Sigmoid colon (tissue), 7 donors: ENCODE measurements at regions of chr10 and their contacts with region 1.

Region 1: DNA sequence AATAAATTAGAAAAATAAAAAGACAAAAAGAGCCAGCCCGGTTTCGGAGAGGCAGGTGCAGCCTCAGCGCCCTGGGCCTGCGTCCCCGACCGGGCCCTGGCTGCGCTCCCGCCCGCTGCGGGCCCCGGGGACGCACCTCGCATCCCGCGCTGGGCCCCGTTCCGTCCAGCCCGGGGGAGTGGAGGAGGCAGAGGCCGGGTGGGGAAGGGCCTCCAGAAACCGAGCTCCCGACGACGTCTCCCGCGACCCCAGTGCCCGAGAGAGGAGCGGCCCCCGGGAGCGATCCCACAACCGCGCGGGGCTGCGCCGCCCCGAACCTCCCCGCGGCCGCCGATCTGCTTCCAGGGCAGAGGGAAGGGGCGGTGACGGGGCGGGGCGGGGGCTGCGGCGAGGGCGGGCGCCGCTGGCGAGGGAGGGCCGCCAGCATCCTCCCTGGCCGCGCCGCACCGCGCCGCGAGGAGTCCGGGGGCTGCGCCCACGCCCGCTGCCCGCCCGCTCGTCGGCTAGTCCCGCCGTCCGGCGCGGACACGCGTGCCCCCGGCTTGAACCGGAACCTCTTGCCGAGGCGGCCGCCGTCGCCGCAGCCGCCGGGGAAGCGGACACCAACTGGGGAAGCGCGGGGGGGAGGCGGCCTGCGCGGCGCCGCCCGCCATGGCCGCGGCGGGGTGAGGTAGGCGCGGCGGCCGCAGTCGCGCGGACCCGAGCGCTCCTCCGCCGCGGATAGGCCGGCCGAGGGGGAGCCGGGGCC is at the start of gene CCNY:
- DNase-seq: peak; percentile 87
- H3K4me3 ChIP-seq: peak within 1 kb of the TSS; percentile 93 to 98 (median 96)
- H3K27ac ChIP-seq: peak within 1 kb of the TSS; percentile 87 to 96 (median 94)
- H3K4me1 ChIP-seq: peaks cover 0 to 79% (median 71%) of the 10 kb centered on the region in 4 donors
- H3K27me3 ChIP-seq: no peaks in the 10 kb centered on the region
- CTCF ChIP-seq: no peak
- EP300 ChIP-seq: no peak
- POLR2A ChIP-seq: peak; percentile 49 to 73
- total RNA-seq, gene CCNY: 35.7 to 45.7 (median 40.7) TPM

Region 2: DNA sequence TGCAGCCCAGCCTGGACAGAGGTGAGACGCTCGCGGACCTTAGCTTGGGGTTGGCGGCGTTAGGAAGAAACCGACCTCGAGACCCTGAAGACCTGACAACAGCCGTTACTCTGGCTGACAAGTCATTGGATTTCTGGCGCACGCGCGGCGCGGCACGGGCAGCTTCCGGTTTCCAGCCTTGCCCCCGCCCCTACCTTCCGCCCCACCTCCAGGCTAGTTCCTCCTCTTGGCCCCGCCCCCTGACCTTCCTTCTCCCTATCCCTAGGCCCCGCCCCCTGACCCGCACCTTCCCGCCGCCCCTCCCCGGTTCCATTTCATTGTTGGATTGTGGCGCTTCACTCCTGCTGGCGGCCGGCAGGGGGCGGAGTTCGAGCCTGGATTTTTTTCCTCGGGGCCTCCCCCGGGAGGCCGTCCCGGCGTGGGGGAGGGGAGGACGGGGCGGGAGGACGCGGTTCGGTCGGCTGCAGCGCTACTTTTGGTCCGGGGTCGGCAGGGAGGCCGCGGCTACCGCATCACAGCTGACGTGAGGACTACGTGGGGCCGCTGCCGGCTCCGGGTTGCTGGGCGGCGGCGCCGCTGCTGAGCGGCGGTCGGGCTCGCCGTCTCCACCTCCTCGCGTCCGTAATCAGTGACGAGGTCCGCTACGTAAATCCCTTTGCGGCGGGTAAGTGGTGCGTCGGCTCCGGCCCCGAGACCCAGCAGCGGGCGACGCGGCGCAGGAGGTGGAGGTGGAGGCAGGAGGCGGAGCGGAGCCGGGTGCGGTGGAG is 209.5 kb before region 1 on chr10 and contains the start of gene CREM:
- intact Hi-C with region 1: loop called (anchors 5 kb)
- DNase-seq: peak; percentile 100
- H3K4me3 ChIP-seq: peak within 1 kb of the TSS; percentile 66 to 98 (median 83)
- H3K27ac ChIP-seq: peak within 1 kb of the TSS; percentile 97 to 100 (median 98)
- H3K4me1 ChIP-seq: peaks cover 0 to 28% (median 13%) of the 10 kb centered on the region in 4 donors
- H3K27me3 ChIP-seq: no peaks in the 10 kb centered on the region
- CTCF ChIP-seq: peak; percentile 72 to 98 (median 88)
- EP300 ChIP-seq: peak; percentile 68 to 93 (median 82)
- POLR2A ChIP-seq: peak; percentile 94 to 95
- total RNA-seq, gene CREM: 37.5 to 76.0 (median 45.3) TPM

Region 3: DNA sequence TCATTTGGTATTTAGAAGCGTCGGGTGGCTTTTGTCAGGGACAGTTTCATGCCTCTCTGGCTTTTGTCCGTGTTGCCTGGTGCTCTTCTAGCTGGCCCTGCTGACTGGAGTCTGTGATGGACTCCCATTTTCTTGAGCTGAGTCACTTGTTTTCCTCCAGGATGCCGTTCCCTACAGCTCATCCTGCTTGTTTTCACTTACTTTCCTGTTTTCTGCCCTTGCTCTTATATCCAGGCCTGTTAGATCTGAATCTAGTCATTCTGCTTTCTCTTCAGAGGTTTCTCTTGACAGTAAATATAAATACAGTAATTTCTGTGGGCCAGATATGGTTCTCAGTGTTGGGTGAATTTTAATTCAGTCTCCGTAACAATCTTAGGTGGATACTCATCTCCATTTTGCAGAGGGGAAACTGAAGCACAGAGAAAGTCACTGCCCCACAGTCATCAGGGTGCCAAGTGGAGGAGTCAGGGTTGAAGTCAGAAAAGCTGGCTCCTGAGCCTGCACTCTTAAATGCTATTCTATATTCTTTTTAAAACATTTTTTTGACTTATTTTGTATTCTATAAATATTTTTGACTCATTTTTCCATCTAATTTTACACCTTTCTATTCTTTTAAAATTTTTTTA is 85.4 kb after region 1 on chr10:
- intact Hi-C with region 1: loop called (anchors 5 kb)
- DNase-seq: peak; percentile 85
- H3K4me3 ChIP-seq: peak overlapping the region in 2 of 4 donors; percentile 15 to 16
- H3K27ac ChIP-seq: peak overlapping the region; percentile 78 to 91 (median 84)
- H3K4me1 ChIP-seq: peaks cover 0 to 95% (median 83%) of the 10 kb centered on the region in 4 donors
- H3K27me3 ChIP-seq: no peaks in the 10 kb centered on the region
- CTCF ChIP-seq: no peak
- EP300 ChIP-seq: peak in 2 of 4 donors; percentile 19 to 50
- POLR2A ChIP-seq: no peak

Region 4: GRCh38 chr10:35451151-35452016 is 115.1 kb after region 1 on chr10:
- intact Hi-C with region 1: loop called (anchors 10 kb)
- DNase-seq: no peak
- H3K4me3 ChIP-seq: no peak overlapping the region
- H3K27ac ChIP-seq: peak overlapping the region; percentile 48 to 73 (median 64)
- H3K4me1 ChIP-seq: peaks cover 0 to 94% (median 75%) of the 10 kb centered on the region in 4 donors
- H3K27me3 ChIP-seq: no peaks in the 10 kb centered on the region
- CTCF ChIP-seq: no peak
- EP300 ChIP-seq: no peak
- POLR2A ChIP-seq: no peak

Region 5: DNA sequence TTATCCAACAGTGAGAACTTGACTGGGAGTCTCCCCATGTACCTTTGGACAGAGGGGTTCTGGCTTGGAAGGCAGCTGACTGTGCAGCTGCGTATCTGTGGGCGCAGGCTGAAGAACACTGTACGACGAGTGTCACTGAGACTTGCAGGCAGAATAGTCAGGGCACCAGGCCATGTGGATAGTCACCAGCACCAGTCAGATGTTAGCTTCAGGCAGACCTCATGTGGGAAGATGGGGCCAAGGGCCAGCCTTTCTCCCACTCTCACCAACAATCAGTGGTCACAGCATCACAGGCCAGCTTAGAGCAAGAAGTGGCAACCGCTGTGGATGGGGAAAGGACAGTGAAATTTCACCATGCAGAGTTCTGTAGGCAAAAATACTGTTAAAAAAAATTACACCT is 225.5 kb after region 1 on chr10:
- intact Hi-C with region 1: loop called (anchors 1 kb)
- DNase-seq: no peak
- H3K4me3 ChIP-seq: no peak overlapping the region
- H3K27ac ChIP-seq: no peak overlapping the region
- H3K4me1 ChIP-seq: peaks cover 0 to 36% (median 32%) of the 10 kb centered on the region in 4 donors
- H3K27me3 ChIP-seq: no peaks in the 10 kb centered on the region
- CTCF ChIP-seq: no peak
- EP300 ChIP-seq: no peak
- POLR2A ChIP-seq: no peak

Region 6: GRCh38 chr10:35765066-35765527 is 428.8 kb after region 1 on chr10:
- intact Hi-C with region 1: no loop called
- DNase-seq: no peak
- H3K4me3 ChIP-seq: no peak overlapping the region
- H3K27ac ChIP-seq: no peak overlapping the region
- H3K4me1 ChIP-seq: peaks cover 0 to 5% (median 3%) of the 10 kb centered on the region in 4 donors
- H3K27me3 ChIP-seq: no peaks in the 10 kb centered on the region
- CTCF ChIP-seq: no peak
- EP300 ChIP-seq: no peak
- POLR2A ChIP-seq: no peak